HAP-1 (cell line): ENCODE measurements at regions of chr17 and their contacts with region 1.

Region 1: DNA sequence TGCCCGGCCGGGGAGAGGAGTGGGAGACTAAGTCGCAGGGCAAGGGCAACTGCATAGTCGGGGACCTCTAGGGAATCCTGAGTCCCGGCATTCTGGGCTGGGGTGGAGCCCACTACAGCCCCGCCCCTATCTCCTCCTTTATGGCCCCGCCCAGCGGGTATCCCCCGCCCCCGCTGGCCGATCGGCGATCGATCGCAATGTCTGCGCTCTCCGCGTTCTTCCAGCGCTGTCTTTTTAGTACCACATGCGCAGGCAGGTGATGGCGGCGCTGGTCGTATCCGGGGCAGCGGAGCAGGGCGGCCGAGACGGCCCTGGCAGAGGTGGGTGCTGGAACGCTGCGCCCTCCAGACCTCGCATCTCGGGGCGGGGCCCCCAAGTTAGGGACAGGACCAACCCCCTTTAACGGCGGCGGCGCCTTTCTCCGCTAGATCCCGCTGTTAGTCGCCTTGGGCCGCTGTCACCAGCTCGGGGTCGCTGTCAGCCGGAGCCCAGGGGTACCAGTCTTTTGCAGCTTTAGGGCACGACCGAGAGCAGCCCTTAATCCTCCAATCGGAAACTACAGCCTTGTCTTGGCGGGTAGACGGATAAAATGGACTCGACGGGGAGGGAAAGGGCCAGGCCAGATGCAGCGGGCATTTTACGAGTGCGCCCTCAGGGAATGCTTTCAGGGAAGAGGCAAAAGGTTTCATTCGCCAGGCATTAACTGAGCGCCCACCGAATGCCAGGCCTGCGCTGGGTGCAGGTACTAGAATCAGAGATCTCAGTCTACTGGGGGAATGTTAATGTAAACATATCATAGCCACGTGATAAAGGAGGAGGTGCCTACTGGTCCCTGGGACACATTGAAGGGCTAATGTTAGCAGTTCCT is at the start of gene DPH1:
- DNase-seq: peak; percentile 95
- H3K4me3 ChIP-seq: peak within 1 kb of the TSS; percentile 98
- H3K4me1 ChIP-seq: peaks cover 12% of the 10 kb centered on the region
- H3K27me3 ChIP-seq: no peaks in the 10 kb centered on the region

Region 2: GRCh38 chr17:1716076-1716995 is 313.8 kb before region 1 on chr17:
- in situ Hi-C with region 1: loop called (anchors 10 kb)
- DNase-seq: peak; percentile 99 to 100
- H3K4me3 ChIP-seq: peak overlapping the region; percentile 69
- H3K4me1 ChIP-seq: peaks cover 17% of the 10 kb centered on the region
- H3K27me3 ChIP-seq: no peaks in the 10 kb centered on the region

Region 3: GRCh38 chr17:1912146-1912545 is 118.0 kb before region 1 on chr17:
- in situ Hi-C with region 1: loop called (anchors 5 kb)
- DNase-seq: no peak
- H3K4me3 ChIP-seq: no peak overlapping the region
- H3K4me1 ChIP-seq: peaks cover 11% of the 10 kb centered on the region
- H3K27me3 ChIP-seq: no peaks in the 10 kb centered on the region

Region 4: GRCh38 chr17:2101448-2102257 is 71.5 kb after region 1 on chr17:
- in situ Hi-C with region 1: no loop called
- DNase-seq: peak in 1 of 2 experiments; percentile 31
- H3K4me3 ChIP-seq: no peak overlapping the region
- H3K4me1 ChIP-seq: peaks cover 5% of the 10 kb centered on the region
- H3K27me3 ChIP-seq: no peaks in the 10 kb centered on the region